Endothelial cell of umbilical vein (primary cell): ENCODE measurements at regions of chr3 and their contacts with region 1.

Region 1: DNA sequence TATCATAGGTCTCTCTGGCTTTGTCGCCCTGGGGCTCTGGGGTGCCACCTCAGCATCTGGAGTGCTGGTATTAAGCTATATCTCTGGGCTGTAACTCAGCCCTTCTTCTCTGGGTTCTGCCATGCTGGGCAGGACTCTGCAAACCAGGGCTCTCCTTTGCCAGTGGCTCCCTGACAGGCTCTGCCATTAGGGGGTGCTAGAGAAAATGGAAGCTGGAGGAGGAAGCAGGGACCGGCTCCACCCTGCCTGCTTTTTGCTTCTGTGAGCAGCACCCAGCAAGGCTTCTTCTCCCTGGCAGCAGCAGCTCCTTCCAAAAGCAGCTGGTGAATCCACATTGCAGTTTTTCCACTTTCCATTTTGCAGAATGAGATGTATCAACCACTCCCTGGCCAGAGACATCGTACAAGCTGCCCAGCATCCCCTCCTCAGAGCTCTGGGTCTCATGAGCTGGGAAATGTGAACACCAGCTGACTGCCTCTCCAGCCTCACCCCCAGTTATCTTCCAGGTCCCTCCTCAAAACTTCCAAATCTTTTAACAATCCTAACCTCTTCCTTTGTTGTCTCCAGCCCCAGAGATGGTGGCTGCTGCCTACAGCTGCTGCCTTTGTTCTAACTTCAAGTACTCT is 165.0 kb downstream of the ABHD5 start:
- DNase-seq: peak; percentile 52
- H3K4me3 ChIP-seq: no peak overlapping the region
- H3K27ac ChIP-seq: no peak overlapping the region
- H3K4me1 ChIP-seq: no peaks in the 10 kb centered on the region
- H3K27me3 ChIP-seq: peaks cover 56% of the 10 kb centered on the region in 2 experiments
- CTCF ChIP-seq: peak; percentile 78 to 82
- POLR2A ChIP-seq: no peak

Region 2: GRCh38 chr3:42961633-42962032 is 894.2 kb before region 1 on chr3:
- CTCF ChIA-PET with region 1: interaction called, 14 read pairs
- POLR2A ChIA-PET with region 1: no interaction called
- dilution Hi-C with region 1: no loop called
- intact Hi-C with region 1: no loop called
- DNase-seq: peak; percentile 55
- H3K4me3 ChIP-seq: no peak overlapping the region
- H3K27ac ChIP-seq: no peak overlapping the region
- H3K4me1 ChIP-seq: no peaks in the 10 kb centered on the region
- H3K27me3 ChIP-seq: peaks cover 3 to 5% of the 10 kb centered on the region in 2 experiments
- CTCF ChIP-seq: peak; percentile 41 to 42
- POLR2A ChIP-seq: no peak

Region 3: DNA sequence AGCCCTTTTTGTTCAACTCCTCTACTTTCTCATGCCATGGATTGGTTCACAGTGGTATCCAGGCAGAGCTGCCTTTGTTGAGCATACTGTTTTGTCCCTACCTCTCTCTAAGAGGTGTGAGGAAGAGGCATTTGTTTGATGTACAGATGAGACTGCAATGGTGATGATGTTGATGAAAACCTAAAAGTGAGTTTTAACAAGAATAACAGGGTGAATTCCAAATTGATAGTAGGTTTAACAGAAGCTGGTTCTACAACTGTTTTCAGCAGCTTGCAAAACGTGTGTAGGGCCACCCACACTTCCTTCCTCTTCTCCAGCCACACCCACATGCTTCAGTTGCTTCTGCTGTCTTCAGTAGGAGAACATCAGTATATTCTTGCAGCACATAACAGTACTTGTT is 559.2 kb before region 1 on chr3:
- CTCF ChIA-PET with region 1: no interaction called
- POLR2A ChIA-PET with region 1: no interaction called
- dilution Hi-C with region 1: no loop called
- intact Hi-C with region 1: no loop called
- DNase-seq: peak; percentile 24
- H3K4me3 ChIP-seq: no peak overlapping the region
- H3K27ac ChIP-seq: no peak overlapping the region
- H3K4me1 ChIP-seq: peaks cover 59% of the 10 kb centered on the region
- H3K27me3 ChIP-seq: no peaks in the 10 kb centered on the region
- CTCF ChIP-seq: no peak
- POLR2A ChIP-seq: no peak

Region 4: GRCh38 chr3:43690400-43691119 is 165.2 kb before region 1 on chr3 and contains the start of gene ABHD5:
- CTCF ChIA-PET with region 1: no interaction called
- POLR2A ChIA-PET with region 1: no interaction called
- dilution Hi-C with region 1: no loop called
- intact Hi-C with region 1: no loop called
- DNase-seq: peak; percentile 97
- H3K4me3 ChIP-seq: peak within 1 kb of the TSS; percentile 62 to 88 (median 87)
- H3K27ac ChIP-seq: peak within 1 kb of the TSS; percentile 76
- H3K4me1 ChIP-seq: peaks cover 12% of the 10 kb centered on the region
- H3K27me3 ChIP-seq: peaks cover 0 to 1% of the 10 kb centered on the region in 2 experiments
- CTCF ChIP-seq: peak; percentile 17 to 55
- POLR2A ChIP-seq: peak; percentile 100
- total RNA-seq, gene ABHD5: 17.1 and 21.2 TPM in 2 replicates

Region 5: GRCh38 chr3:43844757-43845156 is 11.0 kb before region 1 on chr3:
- CTCF ChIA-PET with region 1: interaction called, 22 read pairs
- POLR2A ChIA-PET with region 1: no interaction called
- dilution Hi-C with region 1: no loop called
- intact Hi-C with region 1: no loop called
- DNase-seq: no peak
- H3K4me3 ChIP-seq: no peak overlapping the region
- H3K27ac ChIP-seq: no peak overlapping the region
- H3K4me1 ChIP-seq: no peaks in the 10 kb centered on the region
- H3K27me3 ChIP-seq: peaks cover 2 to 3% of the 10 kb centered on the region in 2 experiments
- CTCF ChIP-seq: no peak
- POLR2A ChIP-seq: no peak

Region 6: GRCh38 chr3:43907508-43907858 is 51.7 kb after region 1 on chr3:
- CTCF ChIA-PET with region 1: interaction called, 10 read pairs
- POLR2A ChIA-PET with region 1: no interaction called
- dilution Hi-C with region 1: no loop called
- intact Hi-C with region 1: no loop called
- DNase-seq: no peak
- H3K4me3 ChIP-seq: no peak overlapping the region
- H3K27ac ChIP-seq: no peak overlapping the region
- H3K4me1 ChIP-seq: no peaks in the 10 kb centered on the region
- H3K27me3 ChIP-seq: peaks cover 7% of the 10 kb centered on the region in 2 experiments
- CTCF ChIP-seq: no peak
- POLR2A ChIP-seq: no peak

Region 7: DNA sequence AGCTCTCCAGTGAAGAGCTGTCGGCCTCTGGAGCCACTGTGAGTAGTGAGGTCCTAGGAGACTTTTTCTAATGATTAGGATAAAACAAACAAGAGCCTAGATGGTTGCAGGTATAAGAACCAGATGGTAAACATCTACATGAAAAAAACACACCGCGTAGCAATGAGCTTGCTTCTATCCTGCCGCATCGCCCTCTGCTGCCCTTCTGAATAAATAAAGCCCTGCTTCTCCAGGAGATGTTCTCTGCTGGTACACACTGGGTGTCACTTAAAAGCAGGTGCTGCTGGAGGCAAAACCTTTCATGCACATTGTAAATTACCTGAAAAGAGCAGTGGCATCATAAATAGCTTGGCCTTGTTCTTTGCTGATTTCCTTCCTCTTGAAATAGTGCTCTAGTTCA is 221.5 kb after region 1 on chr3:
- CTCF ChIA-PET with region 1: interaction called, 14 read pairs
- POLR2A ChIA-PET with region 1: no interaction called
- dilution Hi-C with region 1: no loop called
- intact Hi-C with region 1: no loop called
- DNase-seq: no peak
- H3K4me3 ChIP-seq: no peak overlapping the region
- H3K27ac ChIP-seq: no peak overlapping the region
- H3K4me1 ChIP-seq: no peaks in the 10 kb centered on the region
- H3K27me3 ChIP-seq: no peaks in the 10 kb centered on the region
- CTCF ChIP-seq: no peak
- POLR2A ChIP-seq: no peak

Region 8: GRCh38 chr3:44235604-44236484 is 380.1 kb after region 1 on chr3:
- CTCF ChIA-PET with region 1: interaction called, 10 read pairs
- POLR2A ChIA-PET with region 1: no interaction called
- dilution Hi-C with region 1: no loop called
- intact Hi-C with region 1: loop called (anchors 1 kb)
- DNase-seq: peak; percentile 96
- H3K4me3 ChIP-seq: no peak overlapping the region
- H3K27ac ChIP-seq: peak overlapping the region; percentile 57
- H3K4me1 ChIP-seq: peaks cover 12% of the 10 kb centered on the region
- H3K27me3 ChIP-seq: no peaks in the 10 kb centered on the region
- CTCF ChIP-seq: peak; percentile 59 to 86
- POLR2A ChIP-seq: no peak